Adrenal gland (tissue), 19 donors: ENCODE measurements at regions of chr16 and their contacts with region 1.

Region 1: GRCh38 chr16:24943473-24943872 is 71.7 kb downstream of the ARHGAP17 start:
- DNase-seq: peak in 1 of 7 donors; percentile 20
- H3K4me3 ChIP-seq: no peak overlapping the region
- H3K27ac ChIP-seq: no peak overlapping the region
- H3K4me1 ChIP-seq: no peaks in the 10 kb centered on the region
- H3K27me3 ChIP-seq: no peaks in the 10 kb centered on the region
- CTCF ChIP-seq: no peak
- POLR2A ChIP-seq: no peak

Region 2: DNA sequence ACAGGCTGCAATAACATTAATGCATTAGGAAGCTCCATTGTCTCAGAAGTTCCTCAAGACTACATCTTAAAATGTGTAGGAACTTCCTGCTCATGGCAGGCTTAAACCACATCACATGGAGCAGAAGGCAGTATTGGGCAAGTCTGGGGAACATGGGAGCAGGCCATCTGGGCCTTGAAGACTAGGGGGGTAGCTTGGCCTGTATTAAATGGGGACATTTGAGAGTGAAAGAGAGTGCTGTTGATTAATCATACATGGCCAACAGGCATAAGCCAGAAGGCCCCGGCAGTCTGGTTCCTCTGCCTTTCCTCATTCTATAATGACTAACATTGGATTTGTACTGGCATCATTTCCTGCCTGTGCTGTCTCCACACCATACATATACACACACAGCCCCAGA is 123.0 kb before region 1 on chr16:
- intact Hi-C with region 1: loop called in 1 of 2 experiments (anchors 10 kb)
- DNase-seq: peak in 1 of 7 donors; percentile 50
- H3K4me3 ChIP-seq: no peak overlapping the region
- H3K27ac ChIP-seq: peak overlapping the region in 2 of 5 donors; percentile 13 to 48
- H3K4me1 ChIP-seq: peaks cover 0 to 21% of the 10 kb centered on the region in 2 donors
- H3K27me3 ChIP-seq: no peaks in the 10 kb centered on the region
- CTCF ChIP-seq: no peak
- POLR2A ChIP-seq: no peak